ENCODE measurements at regions of chr12 and their contacts with region 1.

Region 1: GRCh38 chr12:40224439-40225291 is at the start of gene LRRK2:
- DNase-seq: peak; percentile 80 to 81
- H3K4me3 ChIP-seq: peak within 1 kb of the TSS; percentile 53 to 75 (median 54)
- H3K27ac ChIP-seq: peak within 1 kb of the TSS; percentile 87 to 91 (median 91)
- H3K4me1 ChIP-seq: no peaks in the 10 kb centered on the region
- H3K27me3 ChIP-seq: no peaks in the 10 kb centered on the region
- CTCF ChIP-seq: peak in 2 of 6 experiments; percentile 8 to 17
- POLR2A ChIP-seq: peak in 1 of 2 donors; percentile 59
- total RNA-seq, gene LRRK2: 11.0 to 27.6 (median 21.1) TPM

Region 2: DNA sequence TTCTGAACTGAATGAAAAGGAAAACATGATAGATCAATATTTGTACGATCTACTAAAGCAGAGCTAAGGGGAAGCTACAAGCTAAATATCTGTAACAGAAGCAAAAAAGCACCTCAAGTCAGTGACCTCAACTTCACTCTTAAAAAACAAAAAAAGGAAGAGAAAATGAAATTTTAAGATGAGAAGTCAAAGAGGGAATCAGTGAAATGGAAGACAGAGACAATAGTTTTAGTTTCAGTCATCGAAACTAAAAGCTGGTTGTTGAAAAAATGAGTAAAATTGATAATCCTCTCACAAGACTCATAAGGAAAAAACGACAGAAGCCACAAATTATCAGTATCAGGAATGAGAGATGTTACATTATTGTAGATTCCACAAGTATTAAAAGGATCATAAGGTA is 106.8 kb before region 1 on chr12:
- intact Hi-C with region 1: no loop called
- DNase-seq: no peak
- H3K4me3 ChIP-seq: no peak overlapping the region
- H3K27ac ChIP-seq: no peak overlapping the region
- H3K4me1 ChIP-seq: no peaks in the 10 kb centered on the region
- H3K27me3 ChIP-seq: no peaks in the 10 kb centered on the region
- CTCF ChIP-seq: no peak
- POLR2A ChIP-seq: no peak

Region 3: DNA sequence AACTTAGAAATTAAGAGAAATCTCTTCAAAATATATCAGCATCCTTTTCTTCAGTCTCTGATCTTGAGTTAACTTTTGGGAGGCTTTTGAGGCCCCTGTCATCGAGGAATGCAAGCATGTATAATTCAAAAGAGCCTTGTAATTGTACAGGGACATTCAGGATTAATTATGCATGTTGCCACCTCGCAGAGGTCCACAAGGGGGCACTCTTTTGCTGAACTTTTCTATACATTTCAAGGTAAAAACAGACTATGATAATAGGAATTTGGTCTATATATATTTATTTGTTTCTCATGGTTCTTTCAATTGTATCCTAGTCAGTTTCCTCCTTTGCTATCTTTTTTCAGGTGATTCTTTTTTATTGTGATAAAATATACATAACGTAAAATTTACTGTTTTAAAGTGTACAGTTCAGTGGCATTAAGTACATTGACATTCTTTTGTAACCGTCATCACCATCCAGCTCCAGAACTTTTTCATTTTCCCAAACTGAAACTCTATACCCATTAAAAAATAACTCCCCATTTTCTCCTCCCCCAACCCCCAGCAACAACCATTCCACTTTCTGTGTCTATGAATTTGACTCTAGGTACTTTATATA is 71.8 kb before region 1 on chr12:
- intact Hi-C with region 1: loop called (anchors 10 kb)
- DNase-seq: peak; percentile 44 to 54
- H3K4me3 ChIP-seq: no peak overlapping the region
- H3K27ac ChIP-seq: no peak overlapping the region
- H3K4me1 ChIP-seq: no peaks in the 10 kb centered on the region
- H3K27me3 ChIP-seq: no peaks in the 10 kb centered on the region
- CTCF ChIP-seq: peak; percentile 44 to 82 (median 62)
- POLR2A ChIP-seq: no peak

Measured in thyroid gland (tissue), 4 donors.